Aorta (tissue), 5 donors: ENCODE measurements at regions of chr2 and their contacts with region 1.

Region 1: GRCh38 chr2:33033606-33034081 is 86.9 kb downstream of the LTBP1 start:
- DNase-seq: no peak
- ATAC-seq: peak; percentile 77
- H3K4me3 ChIP-seq: peak overlapping the region; percentile 15 to 97
- H3K27ac ChIP-seq: peak overlapping the region in 1 of 2 donors; percentile 57
- H3K4me1 ChIP-seq: no peaks in the 10 kb centered on the region
- H3K27me3 ChIP-seq: no peaks in the 10 kb centered on the region

Region 2: DNA sequence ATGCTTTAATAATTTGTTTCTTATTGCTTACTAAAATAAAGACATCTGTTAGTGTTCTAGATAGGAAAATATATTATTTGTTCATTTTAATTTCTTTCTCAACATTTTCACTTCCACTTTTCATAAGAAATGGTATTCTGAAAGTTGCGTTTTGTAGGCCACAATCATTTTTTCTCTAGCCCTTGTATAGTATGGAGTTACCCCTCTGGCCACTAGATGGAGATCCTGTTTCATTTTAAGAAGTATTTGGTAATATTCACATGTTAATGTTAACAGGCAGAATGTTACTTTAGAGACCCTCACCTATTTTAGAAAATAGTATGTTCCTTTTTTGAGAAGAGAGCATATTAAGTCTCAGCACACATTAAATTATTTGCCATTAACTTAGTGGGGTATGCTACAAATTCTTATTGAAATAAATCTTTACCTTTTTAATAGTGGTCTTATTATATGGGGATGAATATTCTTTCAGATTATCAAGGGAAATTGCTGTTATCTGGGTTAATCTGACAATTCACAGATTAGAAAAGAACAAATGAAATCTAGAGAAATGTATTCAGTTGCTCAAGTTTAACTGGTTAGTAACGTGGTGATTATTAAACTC is 479.7 kb before region 1 on chr2:
- intact Hi-C with region 1: loop called (anchors 5 to 10 kb)
- DNase-seq: no peak
- ATAC-seq: peak; percentile 76
- H3K4me3 ChIP-seq: no peak overlapping the region
- H3K27ac ChIP-seq: no peak overlapping the region
- H3K4me1 ChIP-seq: no peaks in the 10 kb centered on the region
- H3K27me3 ChIP-seq: no peaks in the 10 kb centered on the region

Region 3: DNA sequence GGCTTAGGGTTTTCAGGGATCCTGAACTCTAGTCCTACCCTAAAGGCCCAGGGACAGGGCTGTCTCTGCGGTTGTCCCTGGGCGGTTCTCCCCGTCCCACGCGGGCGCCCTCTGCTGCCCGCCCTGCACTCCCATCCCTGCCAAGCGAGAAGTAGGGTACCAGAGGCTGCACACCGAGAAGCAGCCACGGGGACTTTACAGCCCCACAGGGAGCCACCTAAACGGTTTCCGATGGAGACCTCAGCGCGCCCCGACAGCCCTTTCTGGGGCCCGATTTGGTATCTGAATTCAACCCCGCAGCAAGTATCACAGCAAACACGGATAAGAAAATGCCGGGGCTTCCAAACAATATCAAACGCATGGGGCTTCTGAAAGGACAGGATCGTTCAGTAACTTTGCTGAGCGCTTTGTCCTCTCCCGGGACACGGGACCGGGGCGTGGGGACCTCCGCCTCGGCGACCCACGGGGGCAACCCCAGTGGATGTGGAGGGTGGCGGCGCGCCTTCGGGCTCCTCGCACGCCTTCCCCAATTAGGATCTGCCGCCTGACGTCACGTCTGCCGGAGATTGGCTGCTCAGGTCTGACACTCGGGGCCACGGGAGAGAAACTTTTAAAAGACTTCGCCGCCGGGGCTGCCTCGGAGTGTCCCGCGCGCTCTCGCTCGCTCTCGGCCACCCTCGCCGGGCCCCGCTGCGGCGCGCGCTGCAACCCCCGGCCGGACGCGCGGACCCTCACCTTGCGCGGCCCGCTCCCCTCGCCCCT is 87.1 kb before region 1 on chr2 and contains the start of gene LTBP1:
- intact Hi-C with region 1: loop called in 1 of 2 experiments (anchors 5 kb)
- DNase-seq: peak; percentile 81 to 92
- ATAC-seq: peak; percentile 88
- H3K4me3 ChIP-seq: peak within 1 kb of the TSS; percentile 84 to 96
- H3K27ac ChIP-seq: peak within 1 kb of the TSS; percentile 30 to 36
- H3K4me1 ChIP-seq: no peaks in the 10 kb centered on the region
- H3K27me3 ChIP-seq: no peaks in the 10 kb centered on the region
- total RNA-seq, gene LTBP1: 551 to 573 TPM

Region 4: DNA sequence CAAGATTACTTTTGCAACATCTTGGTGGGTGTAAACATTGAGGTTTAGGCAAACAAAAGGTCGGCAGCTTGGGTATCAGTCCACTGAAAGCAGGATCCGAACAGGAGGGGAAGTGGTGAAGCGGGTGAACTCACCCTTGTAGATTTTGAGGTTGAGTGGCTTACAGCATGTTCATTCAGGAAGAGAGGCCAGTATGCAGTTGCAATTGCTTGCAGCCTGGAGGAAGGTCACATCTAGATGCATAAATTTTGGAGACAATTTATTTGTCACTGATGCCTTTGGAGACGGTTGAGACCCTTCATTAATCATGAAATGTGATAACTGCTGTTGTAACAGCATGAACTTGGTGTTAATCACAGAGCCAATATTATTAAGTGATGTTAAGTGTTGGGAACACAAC is 44.2 kb after region 1 on chr2:
- intact Hi-C with region 1: no loop called
- DNase-seq: no peak
- ATAC-seq: no peak
- H3K4me3 ChIP-seq: no peak overlapping the region
- H3K27ac ChIP-seq: peak overlapping the region in 1 of 2 donors; percentile 57
- H3K4me1 ChIP-seq: peaks cover 3 to 8% of the 10 kb centered on the region in 2 donors
- H3K27me3 ChIP-seq: no peaks in the 10 kb centered on the region

Region 5: DNA sequence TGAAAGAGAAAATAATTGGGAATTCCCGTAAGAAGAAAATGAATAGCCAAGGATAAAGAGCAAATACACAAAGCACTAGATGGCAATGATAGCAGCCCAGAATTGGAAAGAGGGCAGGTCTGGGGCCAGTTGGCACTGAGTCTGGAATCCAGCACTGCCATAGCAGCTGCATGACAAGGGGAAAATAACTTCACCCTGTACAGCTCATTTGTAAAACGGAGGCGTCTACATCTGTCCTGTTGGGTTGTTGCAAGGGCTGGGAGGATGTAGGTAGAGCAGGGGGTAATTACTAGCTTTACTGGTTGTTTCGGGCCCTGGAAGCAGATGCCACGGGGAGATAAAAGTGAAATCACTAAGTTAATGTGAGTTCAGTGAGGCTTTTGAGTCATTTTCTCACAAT is 332.8 kb after region 1 on chr2:
- intact Hi-C with region 1: loop called (anchors 5 to 10 kb)
- DNase-seq: peak; percentile 80 to 81
- ATAC-seq: peak; percentile 89
- H3K4me3 ChIP-seq: no peak overlapping the region
- H3K27ac ChIP-seq: peak overlapping the region; percentile 49 to 90
- H3K4me1 ChIP-seq: peaks cover 0 to 1% of the 10 kb centered on the region in 2 donors
- H3K27me3 ChIP-seq: no peaks in the 10 kb centered on the region

Region 6: DNA sequence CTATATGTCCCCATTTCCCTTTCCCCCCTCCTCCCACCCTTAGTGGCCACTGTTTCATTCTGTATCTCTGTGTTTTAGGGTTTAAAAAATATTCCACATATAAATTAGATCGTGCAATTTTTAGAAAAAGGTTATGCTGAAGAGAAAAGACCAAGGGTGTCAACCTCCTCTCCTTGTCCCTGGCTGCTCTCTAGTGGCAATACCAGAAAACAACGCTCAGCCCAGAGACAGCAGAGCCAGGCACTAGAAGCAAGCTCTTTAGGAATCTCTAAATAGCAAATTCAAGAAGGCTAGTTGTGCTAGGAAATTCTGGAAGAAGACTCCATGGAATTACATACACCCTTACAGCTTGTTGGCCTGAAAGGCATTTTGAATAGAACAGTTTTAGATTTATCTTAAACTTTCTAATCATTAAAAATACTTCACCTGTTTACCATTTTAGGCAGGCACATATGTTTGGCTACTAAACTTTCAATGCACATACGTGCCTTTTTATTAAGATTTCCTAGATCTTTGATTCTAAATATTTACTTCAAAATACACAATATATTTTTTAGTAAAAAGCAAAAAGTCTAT is 407.7 kb after region 1 on chr2:
- intact Hi-C with region 1: loop called (anchors 1 to 5 kb)
- DNase-seq: peak in 1 of 2 donors; percentile 60
- ATAC-seq: peak; percentile 86
- H3K4me3 ChIP-seq: no peak overlapping the region
- H3K27ac ChIP-seq: no peak overlapping the region
- H3K4me1 ChIP-seq: no peaks in the 10 kb centered on the region
- H3K27me3 ChIP-seq: no peaks in the 10 kb centered on the region